BJ (cell line): ENCODE measurements at regions of chr15 and their contacts with region 1.

Region 1: DNA sequence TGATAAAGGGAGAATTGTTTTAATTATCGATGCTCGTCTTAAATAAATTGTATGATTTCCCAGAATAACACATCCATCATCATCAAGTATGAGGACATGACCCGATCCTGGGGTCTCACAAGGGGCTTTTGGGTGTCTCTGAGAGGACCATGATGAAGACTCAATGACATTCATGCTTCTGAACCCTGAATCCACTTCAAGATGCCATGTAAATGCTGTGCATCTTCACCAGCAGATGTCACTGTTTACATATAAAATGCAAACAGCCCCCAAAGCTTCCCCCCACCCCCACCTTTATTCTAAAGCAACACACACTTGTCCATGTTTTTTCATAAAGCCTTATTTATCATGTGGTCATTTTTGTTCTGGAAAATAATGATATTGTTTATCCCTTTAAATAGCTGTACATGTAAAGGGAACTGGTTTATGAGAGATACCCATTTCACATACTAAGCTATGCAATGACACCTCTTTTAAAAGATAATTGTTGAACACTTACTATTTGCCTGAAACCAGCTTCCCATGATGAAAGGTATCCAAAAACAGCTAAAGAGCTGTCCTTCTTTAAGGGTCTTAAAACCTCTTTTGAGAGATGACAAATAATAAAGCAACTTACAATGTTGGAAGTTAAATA is 69.7 kb upstream of the UBE3A start:
- DNase-seq: no peak
- H3K4me3 ChIP-seq: no peak overlapping the region
- H3K27me3 ChIP-seq: no peaks in the 10 kb centered on the region
- CTCF ChIP-seq: peak; percentile 63

Region 2: GRCh38 chr15:26260517-26261133 is 752.1 kb after region 1 on chr15:
- CTCF ChIA-PET with region 1: interaction called, 16 read pairs
- POLR2A ChIA-PET with region 1: no interaction called
- DNase-seq: no peak
- H3K4me3 ChIP-seq: no peak overlapping the region
- H3K27me3 ChIP-seq: no peaks in the 10 kb centered on the region
- CTCF ChIP-seq: peak; percentile 84

Region 3: GRCh38 chr15:26864664-26865191 is 1356.2 kb after region 1 on chr15:
- CTCF ChIA-PET with region 1: interaction called, 11 read pairs
- POLR2A ChIA-PET with region 1: no interaction called
- DNase-seq: no peak
- H3K4me3 ChIP-seq: no peak overlapping the region
- H3K27me3 ChIP-seq: peaks cover 5% of the 10 kb centered on the region
- CTCF ChIP-seq: peak; percentile 57